Dorsolateral prefrontal cortex (tissue), 120 donors: ENCODE measurements at regions of chr9 and their contacts with region 1.

Region 1: GRCh38 chr9:20622330-20623020 is at the start of gene MLLT3:
- DNase-seq: peak; percentile 94 to 98 (median 96)
- H3K4me3 ChIP-seq: peak within 1 kb of the TSS; percentile 61 to 97 (median 90)
- H3K27ac ChIP-seq: peak within 1 kb of the TSS; percentile 78 to 99 (median 97)
- H3K27me3 ChIP-seq: no peaks in the 10 kb centered on the region
- CTCF ChIP-seq: peak in 50 of 56 donors; percentile 9 to 68 (median 45)
- total RNA-seq, gene MLLT3: 18.6 to 58.3 (median 34.2) TPM

Region 2: DNA sequence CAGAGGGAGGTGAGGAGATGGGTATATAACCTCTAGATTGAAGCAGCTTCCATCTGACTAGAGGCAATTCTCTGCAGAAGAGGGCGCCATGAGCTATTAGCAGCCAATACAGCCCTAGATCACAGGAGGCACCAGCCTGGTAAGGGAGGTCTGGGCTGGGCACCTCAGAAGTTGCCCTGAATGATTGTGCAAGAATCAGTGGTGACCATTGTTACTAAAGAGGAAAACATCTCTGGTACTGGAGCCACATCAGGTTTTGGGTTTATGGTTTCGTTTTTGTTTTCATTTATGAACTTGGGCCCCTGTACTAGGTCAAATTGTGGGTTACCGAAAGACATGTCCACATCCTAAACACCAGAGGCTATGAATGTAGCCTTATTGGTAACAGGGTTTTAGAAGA is 342.1 kb before region 1 on chr9:
- intact Hi-C with region 1: no loop called
- DNase-seq: no peak
- H3K4me3 ChIP-seq: no peak overlapping the region
- H3K27ac ChIP-seq: no peak overlapping the region
- H3K27me3 ChIP-seq: no peaks in the 10 kb centered on the region
- CTCF ChIP-seq: no peak

Region 3: GRCh38 chr9:20552874-20553575 is 69.5 kb before region 1 on chr9:
- intact Hi-C with region 1: loop called (anchors 5 to 10 kb)
- DNase-seq: no peak
- H3K4me3 ChIP-seq: no peak overlapping the region
- H3K27ac ChIP-seq: no peak overlapping the region
- H3K27me3 ChIP-seq: no peaks in the 10 kb centered on the region
- CTCF ChIP-seq: peak in 38 of 56 donors; percentile 3 to 54 (median 27)

Region 4: DNA sequence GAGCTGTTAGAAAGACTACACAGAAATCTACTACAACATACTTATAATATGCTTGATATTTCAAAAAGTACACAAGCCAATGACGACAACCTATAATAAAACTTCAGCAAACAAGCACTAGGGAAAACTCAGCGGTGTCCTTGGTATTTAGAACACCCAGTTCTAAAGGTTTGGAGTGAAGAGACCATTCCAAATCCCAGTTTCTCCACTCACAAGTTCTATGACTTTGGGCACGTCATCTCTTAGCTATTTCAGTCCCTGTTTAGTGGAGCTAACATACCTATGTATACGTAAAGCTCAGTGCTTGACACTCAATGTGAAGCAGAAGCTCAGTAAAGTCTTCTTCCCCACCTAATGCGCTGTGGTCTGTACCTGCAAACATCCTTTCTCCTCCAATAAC is 53.0 kb before region 1 on chr9:
- intact Hi-C with region 1: no loop called
- DNase-seq: no peak
- H3K4me3 ChIP-seq: no peak overlapping the region
- H3K27ac ChIP-seq: no peak overlapping the region
- H3K27me3 ChIP-seq: no peaks in the 10 kb centered on the region
- CTCF ChIP-seq: no peak

Region 5: DNA sequence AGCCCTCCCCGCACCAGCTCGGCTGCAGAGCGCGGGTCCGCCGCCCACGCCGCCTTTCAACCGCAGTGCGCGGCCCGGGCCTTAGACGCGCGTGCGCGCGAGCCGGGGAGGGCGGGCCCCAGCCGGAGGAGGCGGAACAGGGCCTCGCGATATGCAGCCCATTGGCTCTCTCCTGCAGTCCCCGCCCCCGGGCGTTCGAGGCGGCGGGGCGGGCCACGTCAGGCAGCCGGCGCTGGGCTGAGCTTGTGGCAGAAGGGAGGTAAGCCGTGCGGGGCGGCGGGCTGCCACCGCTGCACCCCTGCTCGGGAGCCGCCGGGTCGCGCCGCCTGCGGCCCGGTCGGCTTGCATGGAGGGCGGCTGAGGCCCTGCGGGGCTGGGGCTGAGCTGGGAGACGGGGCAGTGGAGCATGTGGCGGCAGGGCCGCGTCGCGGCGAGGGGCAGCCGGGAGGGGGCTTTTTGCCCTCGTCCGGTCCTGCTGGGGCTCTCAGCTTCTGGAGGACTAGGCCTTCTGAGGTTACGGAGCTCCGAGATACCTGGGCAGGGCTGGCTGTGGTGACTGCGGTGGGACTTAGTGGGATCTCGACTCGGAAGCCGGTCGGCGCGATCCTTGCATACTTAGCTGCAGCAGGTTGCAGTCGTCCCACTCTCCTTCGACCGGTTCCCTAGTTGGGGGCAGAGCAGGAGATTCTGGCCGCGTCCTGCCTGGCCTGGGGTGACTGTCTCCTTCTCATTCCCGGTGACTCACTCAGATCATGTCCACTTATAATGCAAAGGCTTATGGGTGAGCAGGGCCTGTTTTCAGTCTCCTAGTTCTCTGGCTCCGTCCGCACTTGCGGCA is 61.8 kb after region 1 on chr9 and contains the start of gene FOCAD:
- intact Hi-C with region 1: loop called (anchors 2 kb)
- DNase-seq: peak; percentile 90 to 99 (median 96)
- H3K4me3 ChIP-seq: peak within 1 kb of the TSS; percentile 49 to 99 (median 93)
- H3K27ac ChIP-seq: peak within 1 kb of the TSS in 58 of 59 donors; percentile 43 to 94 (median 85)
- H3K27me3 ChIP-seq: no peaks in the 10 kb centered on the region
- CTCF ChIP-seq: peak in 39 of 56 donors; percentile 3 to 52 (median 31)
- total RNA-seq, gene FOCAD: 51.6 to 172 (median 114) TPM

Region 6: GRCh38 chr9:20941174-20941690 is 318.8 kb after region 1 on chr9:
- intact Hi-C with region 1: loop called (anchors 2 to 5 kb)
- DNase-seq: peak in 6 of 10 donors; percentile 30 to 63 (median 44)
- H3K4me3 ChIP-seq: no peak overlapping the region
- H3K27ac ChIP-seq: no peak overlapping the region
- H3K27me3 ChIP-seq: no peaks in the 10 kb centered on the region
- CTCF ChIP-seq: peak; percentile 57 to 98 (median 89)